Activated naive CD4-positive, alpha-beta T cell treated with anti-CD3 and anti-CD28 coated beads, Interleukin-2, amount 10 ng/mL, durations not matched to agents 7 days and 5 days (primary cell): ENCODE measurements at regions of chr14 and their contacts with region 1.

Region 1: GRCh38 chr14:21825149-21825743 is 151.6 kb upstream of the OR4E1 start:
- DNase-seq: peak; percentile 66
- H3K4me3 Mint-ChIP-seq: peak overlapping the region; percentile 62
- H3K27ac Mint-ChIP-seq: peak overlapping the region; percentile 60
- H3K4me1 Mint-ChIP-seq: peaks cover 9% of the 10 kb centered on the region
- H3K27me3 Mint-ChIP-seq: peaks cover 41% of the 10 kb centered on the region

Region 2: DNA sequence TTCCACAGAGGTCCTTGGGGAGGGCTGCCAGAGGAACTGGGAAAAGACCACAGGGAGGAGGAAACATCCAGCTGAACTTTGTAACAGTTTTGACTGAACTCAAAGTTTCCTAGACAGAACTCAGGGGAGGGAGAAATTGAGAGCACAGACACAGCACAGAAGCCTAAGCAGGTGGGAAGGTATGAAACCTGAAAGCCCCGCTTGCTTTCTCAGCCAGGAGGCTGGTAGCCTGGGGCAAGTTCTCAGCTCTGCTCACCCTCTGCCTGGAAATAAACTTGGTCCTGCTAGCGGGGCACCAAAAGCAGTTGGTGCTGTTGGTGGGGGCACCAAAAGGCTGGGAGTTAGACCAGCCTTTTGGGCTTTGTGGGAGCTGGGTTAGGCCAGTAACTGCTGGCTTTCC is 125.7 kb before region 1 on chr14:
- CTCF ChIA-PET with region 1: no interaction called
- DNase-seq: no peak
- H3K4me3 Mint-ChIP-seq: no peak overlapping the region
- H3K27ac Mint-ChIP-seq: no peak overlapping the region
- H3K4me1 Mint-ChIP-seq: peaks cover 9% of the 10 kb centered on the region
- H3K27me3 Mint-ChIP-seq: peaks cover 14% of the 10 kb centered on the region

Region 3: DNA sequence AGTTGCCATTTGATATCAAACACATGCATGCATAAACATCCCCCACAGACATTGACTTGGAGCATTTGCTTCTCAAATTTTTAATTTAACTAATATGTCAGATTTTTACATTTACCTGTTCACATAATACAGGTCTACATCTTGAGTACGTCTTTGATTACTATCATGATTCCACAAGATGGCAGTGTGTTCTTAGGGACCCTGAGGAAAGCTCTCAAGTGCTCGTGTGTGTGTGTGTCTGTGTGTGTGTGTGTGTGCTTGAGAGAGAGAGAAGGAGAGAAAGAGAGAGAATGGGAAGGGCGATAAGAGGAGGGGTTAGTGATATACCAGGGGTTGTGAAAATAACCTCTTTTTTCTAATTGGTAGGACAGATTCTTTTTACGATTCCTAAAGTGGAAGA is 15.5 kb after region 1 on chr14:
- CTCF ChIA-PET with region 1: interaction called, 15 read pairs
- DNase-seq: no peak
- H3K4me3 Mint-ChIP-seq: peak overlapping the region; percentile 61
- H3K27ac Mint-ChIP-seq: peak overlapping the region; percentile 64
- H3K4me1 Mint-ChIP-seq: peaks cover 21% of the 10 kb centered on the region
- H3K27me3 Mint-ChIP-seq: peaks cover 34% of the 10 kb centered on the region